ENCODE measurements at regions of chrX and their contacts with region 1.

Region 1: DNA sequence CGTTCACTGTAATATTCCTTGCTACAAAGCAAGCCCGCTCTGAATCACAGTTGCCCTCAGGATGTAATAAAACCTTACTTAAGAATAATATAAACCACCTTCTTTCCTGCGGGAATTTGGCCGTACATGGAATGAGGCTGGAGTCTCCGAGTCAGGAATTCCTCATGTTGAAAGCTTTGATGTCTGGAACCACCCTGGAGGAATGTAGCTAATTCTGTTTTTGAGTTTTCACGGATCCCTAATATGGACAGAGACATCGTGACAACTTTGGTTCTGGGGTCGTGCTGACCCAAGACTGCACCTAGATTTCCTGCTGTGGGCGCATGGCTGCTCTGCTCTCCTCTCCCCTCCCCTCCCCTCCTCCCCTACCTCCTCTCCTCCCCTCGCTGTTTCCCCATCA is 58.4 kb downstream of the CRLF2 start:
- DNase-seq: no peak
- H3K4me3 Mint-ChIP-seq: no peak overlapping the region
- H3K27ac Mint-ChIP-seq: no peak overlapping the region
- H3K4me1 Mint-ChIP-seq: no peaks in the 10 kb centered on the region
- H3K27me3 Mint-ChIP-seq: peaks cover 3% of the 10 kb centered on the region

Region 2: GRCh38 chrX:427812-428725 is 725.9 kb before region 1 on chrX:
- CTCF ChIA-PET with region 1: no interaction called
- intact Hi-C with region 1: loop called (anchors 10 kb)
- DNase-seq: peak; percentile 51
- H3K4me3 Mint-ChIP-seq: peak overlapping the region; percentile 53
- H3K27ac Mint-ChIP-seq: no peak overlapping the region
- H3K4me1 Mint-ChIP-seq: peaks cover 6% of the 10 kb centered on the region
- H3K27me3 Mint-ChIP-seq: peaks cover 26% of the 10 kb centered on the region

Region 3: GRCh38 chrX:1140236-1140681 is 13.7 kb before region 1 on chrX:
- CTCF ChIA-PET with region 1: no interaction called
- intact Hi-C with region 1: no loop called
- DNase-seq: no peak
- H3K4me3 Mint-ChIP-seq: no peak overlapping the region
- H3K27ac Mint-ChIP-seq: no peak overlapping the region
- H3K4me1 Mint-ChIP-seq: no peaks in the 10 kb centered on the region
- H3K27me3 Mint-ChIP-seq: no peaks in the 10 kb centered on the region